ENCODE measurements at regions of chr15 and their contacts with region 1.

Region 1: DNA sequence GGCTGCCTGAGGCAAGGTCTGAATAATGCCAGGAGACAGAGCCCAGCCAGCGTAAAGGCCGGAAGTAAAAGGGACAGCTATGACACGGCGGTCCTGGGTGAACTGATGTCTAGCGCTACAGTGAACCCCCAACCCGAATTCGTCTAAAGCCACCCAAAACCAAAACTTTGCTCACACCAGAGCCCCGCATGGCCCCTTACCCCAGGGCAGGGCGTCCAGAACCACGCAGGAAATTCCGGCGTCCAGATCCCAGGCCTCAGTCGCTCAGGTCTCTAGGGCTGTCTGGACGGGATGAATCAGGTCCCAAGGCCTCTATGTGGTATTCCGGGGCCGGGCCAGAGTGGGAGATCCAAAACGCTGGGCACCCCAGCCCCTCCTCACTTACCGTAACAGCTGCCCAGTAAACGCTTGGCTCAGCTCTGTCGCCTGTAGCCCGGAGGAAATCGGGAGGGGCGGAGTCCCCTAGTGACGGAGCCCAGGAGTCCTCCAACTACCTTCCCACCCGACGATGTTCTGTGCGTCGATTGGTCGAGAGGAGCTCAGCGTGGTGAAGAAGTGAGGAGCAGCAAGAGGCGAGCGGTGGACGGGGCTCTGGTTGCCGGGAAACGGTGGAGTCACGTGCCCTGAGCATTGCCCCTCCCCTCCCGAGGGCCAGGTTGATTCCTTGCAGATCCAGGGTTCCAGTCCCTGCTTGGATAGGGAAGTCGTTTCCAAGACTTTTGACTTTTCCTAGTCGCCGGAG is at the start of gene CCDC32:
- DNase-seq: peak; percentile 75 to 96 (median 93)
- ATAC-seq: peak; percentile 95
- H3K4me3 ChIP-seq: peak within 1 kb of the TSS; percentile 85
- H3K4me3 Mint-ChIP-seq: peak within 1 kb of the TSS; percentile 80 to 97 (median 96)
- H3K27ac ChIP-seq: peak within 1 kb of the TSS; percentile 96
- H3K27ac Mint-ChIP-seq: peak within 1 kb of the TSS; percentile 82 to 98 (median 95)
- H3K4me1 ChIP-seq: peaks cover 11 to 15% of the 10 kb centered on the region in 2 donors
- H3K4me1 Mint-ChIP-seq: peaks cover 35 to 57% (median 55%) of the 10 kb centered on the region in 7 donors
- H3K27me3 ChIP-seq: no peaks in the 10 kb centered on the region
- H3K27me3 Mint-ChIP-seq: peaks cover 0 to 8% (median 0%) of the 10 kb centered on the region in 5 donors
- total RNA-seq, gene CCDC32: 22.4 to 37.3 (median 33.3) TPM

Region 2: DNA sequence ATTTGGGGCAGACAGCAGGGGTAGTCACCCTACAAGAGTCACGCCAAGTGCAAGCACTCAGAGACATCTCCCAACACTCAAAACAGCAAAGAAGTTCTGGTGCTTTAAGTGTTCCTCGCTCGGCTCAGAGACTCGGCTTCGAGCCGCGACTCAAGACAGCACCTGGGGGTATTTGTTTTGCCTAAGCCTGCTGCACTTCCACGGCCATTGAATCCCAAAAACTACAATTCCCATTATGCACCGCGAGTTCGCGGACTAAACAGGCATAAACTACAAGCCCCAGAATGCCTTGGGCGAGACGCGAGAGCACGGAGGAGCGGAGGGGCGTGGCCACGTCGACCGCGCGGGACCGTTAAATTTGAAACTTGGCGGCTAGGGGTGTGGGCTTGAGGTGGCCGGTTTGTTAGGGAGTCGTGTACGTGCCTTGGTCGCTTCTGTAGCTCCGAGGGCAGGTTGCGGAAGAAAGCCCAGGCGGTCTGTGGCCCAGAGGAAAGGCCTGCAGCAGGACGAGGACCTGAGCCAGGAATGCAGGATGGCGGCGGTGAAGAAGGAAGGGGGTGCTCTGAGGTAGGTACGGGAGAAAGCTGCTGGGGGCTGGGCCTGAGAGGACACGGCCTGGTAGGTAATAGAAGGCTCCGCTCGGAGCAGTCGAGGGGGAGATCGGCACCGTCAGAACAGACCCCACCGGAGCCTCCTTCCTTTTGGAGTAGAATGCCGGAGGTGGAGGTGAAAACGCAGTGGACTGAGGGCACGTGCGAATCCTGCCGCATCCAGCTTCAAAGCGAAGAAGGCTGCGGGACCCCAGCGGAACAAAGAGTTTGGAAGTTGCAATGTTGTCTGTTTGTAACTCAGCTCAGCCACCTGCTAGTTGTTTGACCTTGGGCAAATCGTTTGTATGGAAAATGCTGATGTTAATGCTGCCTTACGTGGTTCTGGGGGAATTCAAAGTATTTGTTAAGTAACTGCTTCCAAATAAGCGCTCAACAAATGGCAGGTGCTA is 403.8 kb before region 1 on chr15 and contains the start of gene BUB1B:
- CTCF ChIA-PET with region 1: no interaction called
- POLR2A ChIA-PET with region 1: no interaction called
- intact Hi-C with region 1: loop called in 1 of 2 experiments (anchors 2 kb)
- DNase-seq: peak; percentile 79 to 94 (median 92)
- ATAC-seq: peak; percentile 100
- H3K4me3 ChIP-seq: peak within 1 kb of the TSS; percentile 80
- H3K4me3 Mint-ChIP-seq: peak within 1 kb of the TSS in 2 of 10 donors; percentile 15 to 51
- H3K27ac ChIP-seq: peak within 1 kb of the TSS; percentile 29
- H3K27ac Mint-ChIP-seq: no peak within 1 kb of the TSS
- H3K4me1 ChIP-seq: peaks cover 0 to 7% of the 10 kb centered on the region in 2 donors
- H3K4me1 Mint-ChIP-seq: peaks cover 0 to 12% (median 0%) of the 10 kb centered on the region in 7 donors
- H3K27me3 ChIP-seq: no peaks in the 10 kb centered on the region
- H3K27me3 Mint-ChIP-seq: no peaks in the 10 kb centered on the region
- total RNA-seq, gene BUB1B: 0.41 to 55.7 (median 1.2) TPM

Region 3: DNA sequence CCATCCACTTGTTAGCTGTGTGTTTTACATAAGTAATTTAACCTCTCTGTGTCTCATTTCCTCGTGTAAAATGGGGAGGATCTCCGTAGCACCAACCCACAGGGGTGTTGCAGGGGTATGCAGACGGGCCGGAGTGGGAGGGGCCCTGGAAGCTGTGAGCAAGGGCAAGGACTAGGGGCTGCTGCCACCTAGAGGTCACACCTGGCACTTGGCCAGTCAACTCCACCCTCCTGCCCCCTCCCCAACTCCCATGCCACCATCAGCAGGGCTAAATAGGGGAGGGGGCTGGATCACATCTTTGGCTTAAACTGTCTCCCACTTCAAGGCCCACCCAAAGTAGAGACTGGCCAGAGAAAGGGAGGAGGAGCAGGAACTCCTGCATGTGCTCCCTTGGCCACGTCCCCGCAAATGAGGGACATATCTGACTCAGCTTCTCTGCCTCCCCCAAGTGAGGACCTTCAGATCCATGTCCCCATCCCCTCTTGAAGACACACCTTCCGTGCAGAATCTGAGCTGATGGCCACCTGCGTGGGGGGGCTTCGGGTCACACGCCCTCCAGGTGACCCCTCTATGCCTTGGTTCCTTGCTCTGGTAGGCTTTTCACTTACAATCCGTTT is 226.6 kb before region 1 on chr15:
- CTCF ChIA-PET with region 1: no interaction called
- POLR2A ChIA-PET with region 1: no interaction called
- intact Hi-C with region 1: no loop called
- DNase-seq: peak; percentile 61 to 79 (median 76)
- ATAC-seq: peak; percentile 87
- H3K4me3 ChIP-seq: no peak overlapping the region
- H3K4me3 Mint-ChIP-seq: peak overlapping the region in 4 of 10 donors; percentile 37 to 67 (median 48)
- H3K27ac ChIP-seq: no peak overlapping the region
- H3K27ac Mint-ChIP-seq: peak overlapping the region in 4 of 9 donors; percentile 6 to 53 (median 42)
- H3K4me1 ChIP-seq: peaks cover 0 to 16% of the 10 kb centered on the region in 2 donors
- H3K4me1 Mint-ChIP-seq: peaks cover 0 to 22% (median 20%) of the 10 kb centered on the region in 7 donors
- H3K27me3 ChIP-seq: no peaks in the 10 kb centered on the region
- H3K27me3 Mint-ChIP-seq: no peaks in the 10 kb centered on the region

Region 4: DNA sequence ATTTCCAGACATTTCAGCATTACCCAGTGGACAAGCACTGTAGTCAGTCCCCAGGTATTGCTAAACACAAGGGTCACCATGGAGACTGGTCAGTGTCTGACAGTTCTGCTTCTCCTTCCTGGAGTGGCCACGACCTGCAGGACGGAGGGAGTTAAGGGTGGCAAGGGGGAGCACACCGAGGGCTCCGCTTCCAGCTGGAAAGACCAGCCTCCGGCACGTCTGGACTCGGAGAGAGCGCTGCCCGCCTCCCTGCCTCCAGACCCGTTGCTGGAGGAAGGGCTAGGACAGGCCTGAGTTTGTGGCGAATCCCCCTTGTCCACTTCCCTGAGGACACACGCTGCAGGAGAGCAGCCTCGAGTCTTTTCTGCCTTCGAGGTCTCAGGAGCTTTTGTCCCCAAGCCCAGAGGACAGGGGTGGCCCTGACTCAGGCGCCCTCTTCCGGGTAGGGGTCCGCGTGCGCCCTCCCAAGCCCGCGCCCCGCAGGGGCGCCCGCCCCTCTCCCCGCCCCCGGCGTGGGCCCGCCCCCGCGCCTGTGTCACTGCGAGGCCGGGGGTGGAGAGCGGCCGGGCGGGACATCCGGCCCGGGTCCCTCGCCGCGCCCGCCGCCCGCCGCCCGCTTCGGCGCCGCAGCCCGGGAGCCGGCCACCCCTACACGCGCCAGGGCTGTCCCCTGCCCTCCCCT is 94.2 kb before region 1 on chr15 and contains the start of gene CHST14:
- CTCF ChIA-PET with region 1: no interaction called
- POLR2A ChIA-PET with region 1: no interaction called
- intact Hi-C with region 1: loop called (anchors 1 to 10 kb)
- DNase-seq: peak; percentile 24 to 68 (median 53)
- ATAC-seq: peak; percentile 88
- H3K4me3 ChIP-seq: peak within 1 kb of the TSS; percentile 89
- H3K4me3 Mint-ChIP-seq: peak within 1 kb of the TSS; percentile 90 to 96 (median 92)
- H3K27ac ChIP-seq: peak within 1 kb of the TSS; percentile 81
- H3K27ac Mint-ChIP-seq: peak within 1 kb of the TSS; percentile 80 to 95 (median 87)
- H3K4me1 ChIP-seq: peaks cover 8 to 16% of the 10 kb centered on the region in 2 donors
- H3K4me1 Mint-ChIP-seq: peaks cover 15 to 47% (median 37%) of the 10 kb centered on the region in 7 donors
- H3K27me3 ChIP-seq: no peaks in the 10 kb centered on the region
- H3K27me3 Mint-ChIP-seq: peaks cover 0 to 3% (median 0%) of the 10 kb centered on the region in 5 donors
- total RNA-seq, gene CHST14: 7.3 to 12.5 (median 10.8) TPM

Region 5: DNA sequence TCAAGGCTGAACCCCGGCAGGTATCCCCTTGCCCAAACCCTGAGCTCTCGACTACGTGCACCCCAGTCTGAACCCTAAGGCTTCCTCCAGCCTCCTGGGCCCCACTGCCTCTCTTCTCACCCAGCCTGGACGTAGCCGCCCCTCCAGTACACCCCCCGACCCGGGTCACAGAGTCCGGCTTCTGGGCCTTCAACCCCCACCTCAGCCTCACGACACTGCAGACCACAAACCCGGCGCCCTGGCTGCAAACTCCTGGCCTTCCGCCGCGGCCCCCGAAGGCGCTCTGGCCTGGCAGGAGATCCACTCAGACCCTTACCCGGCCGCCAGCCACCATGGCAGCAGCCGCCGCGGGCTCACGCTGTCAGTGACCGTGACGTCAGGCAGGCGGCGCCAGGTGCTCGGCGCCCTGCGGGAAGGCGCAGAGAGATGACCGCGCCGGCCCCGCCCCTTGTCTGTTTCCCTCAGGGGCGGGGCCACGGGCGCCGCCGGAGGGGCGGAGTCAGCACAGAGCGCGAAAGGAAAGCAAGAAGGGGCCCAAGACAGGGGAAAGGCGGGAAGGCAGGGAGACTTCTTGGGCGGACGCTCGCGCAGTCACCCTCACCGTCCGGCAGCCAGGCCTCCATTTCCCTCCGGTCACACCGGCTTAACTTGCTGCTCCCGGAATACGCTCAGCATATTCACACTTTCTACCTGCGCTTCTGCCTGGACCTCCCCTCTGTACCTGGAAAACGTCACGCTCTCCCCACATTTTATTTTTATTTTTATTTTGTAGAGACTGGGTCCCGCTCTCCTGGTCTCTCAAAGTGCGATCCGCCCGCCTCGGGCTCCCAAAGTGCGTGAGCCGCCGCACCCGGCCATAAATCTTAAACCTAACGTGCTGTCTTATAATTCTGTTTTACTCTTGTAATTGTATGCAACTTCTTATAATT is 190.4 kb after region 1 on chr15 and contains the start of gene RMDN3:
- CTCF ChIA-PET with region 1: no interaction called
- POLR2A ChIA-PET with region 1: no interaction called
- intact Hi-C with region 1: loop called (anchors 1 kb)
- DNase-seq: peak; percentile 89 to 97 (median 92)
- ATAC-seq: peak; percentile 99
- H3K4me3 ChIP-seq: peak within 1 kb of the TSS; percentile 94
- H3K4me3 Mint-ChIP-seq: peak within 1 kb of the TSS; percentile 90 to 98 (median 94)
- H3K27ac ChIP-seq: peak within 1 kb of the TSS; percentile 95
- H3K27ac Mint-ChIP-seq: peak within 1 kb of the TSS; percentile 89 to 99 (median 95)
- H3K4me1 ChIP-seq: peaks cover 7 to 10% of the 10 kb centered on the region in 2 donors
- H3K4me1 Mint-ChIP-seq: peaks cover 16 to 37% (median 27%) of the 10 kb centered on the region in 7 donors
- H3K27me3 ChIP-seq: no peaks in the 10 kb centered on the region
- H3K27me3 Mint-ChIP-seq: no peaks in the 10 kb centered on the region
- total RNA-seq, gene RMDN3: 19.5 to 44.0 (median 31.9) TPM

Region 6: DNA sequence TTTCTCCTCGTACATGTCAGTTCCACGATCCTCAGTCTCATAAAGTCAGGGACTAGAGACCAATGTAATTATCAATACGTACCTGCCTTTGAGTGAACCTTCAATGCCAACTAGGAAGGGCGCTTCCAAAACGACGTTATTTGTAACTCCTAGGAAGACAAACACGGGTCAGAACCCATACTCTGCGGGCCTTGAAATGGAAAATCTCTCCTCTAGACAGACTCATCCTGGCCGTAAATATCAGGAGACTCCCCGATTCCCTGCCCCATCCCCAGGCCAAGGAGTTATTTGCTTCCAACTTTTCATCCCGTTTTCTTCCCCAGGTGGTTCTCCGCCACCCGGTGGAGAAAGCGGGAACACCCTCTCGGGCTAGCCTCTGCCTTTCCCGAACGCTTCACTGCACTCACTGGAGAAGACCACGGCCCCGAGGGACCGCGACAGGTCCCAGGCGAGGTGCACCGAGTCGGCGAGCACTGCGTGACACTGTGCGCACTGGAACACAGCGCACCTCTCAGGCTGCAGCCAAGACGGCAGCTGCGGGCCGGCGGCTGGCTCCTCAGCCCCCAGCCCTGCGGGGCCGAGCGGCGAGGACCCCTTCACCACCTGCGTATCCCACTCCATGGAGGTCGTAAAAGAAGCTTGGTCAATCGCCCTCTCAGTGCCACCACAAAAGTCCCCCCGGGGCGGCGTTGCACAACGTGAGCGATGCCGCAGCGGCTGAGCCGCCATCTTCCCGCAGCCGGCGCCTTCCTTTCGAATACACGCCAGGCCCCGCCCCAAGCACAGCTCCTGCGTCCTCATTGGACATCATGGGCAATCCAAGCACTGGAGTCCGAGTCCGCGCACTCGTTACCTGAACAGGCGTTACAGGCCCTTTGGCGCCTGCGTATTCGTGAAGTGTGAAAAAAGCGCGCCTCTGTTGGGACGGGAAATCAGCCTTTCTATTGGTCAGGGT is 767.3 kb after region 1 on chr15 and contains the start of gene OIP5:
- CTCF ChIA-PET with region 1: no interaction called
- POLR2A ChIA-PET with region 1: no interaction called
- intact Hi-C with region 1: loop called in 1 of 2 experiments (anchors 1 kb)
- DNase-seq: peak; percentile 83 to 99 (median 97)
- ATAC-seq: peak; percentile 98
- H3K4me3 ChIP-seq: peak within 1 kb of the TSS; percentile 95
- H3K4me3 Mint-ChIP-seq: peak within 1 kb of the TSS; percentile 87 to 100 (median 97)
- H3K27ac ChIP-seq: peak within 1 kb of the TSS; percentile 52
- H3K27ac Mint-ChIP-seq: peak within 1 kb of the TSS; percentile 77 to 97 (median 91)
- H3K4me1 ChIP-seq: peaks cover 9 to 13% of the 10 kb centered on the region in 2 donors
- H3K4me1 Mint-ChIP-seq: peaks cover 12 to 32% (median 29%) of the 10 kb centered on the region in 7 donors
- H3K27me3 ChIP-seq: no peaks in the 10 kb centered on the region
- H3K27me3 Mint-ChIP-seq: no peaks in the 10 kb centered on the region
- total RNA-seq, gene OIP5: 0.32 to 15.2 (median 0.54) TPM in 4 of 5 experiments, not detected in the other

Region 7: GRCh38 chr15:42474827-42475226 is 1910.1 kb after region 1 on chr15:
- CTCF ChIA-PET with region 1: no interaction called
- POLR2A ChIA-PET with region 1: no interaction called
- intact Hi-C with region 1: no loop called
- DNase-seq: no peak
- ATAC-seq: no peak
- H3K4me3 ChIP-seq: no peak overlapping the region
- H3K4me3 Mint-ChIP-seq: no peak overlapping the region
- H3K27ac ChIP-seq: no peak overlapping the region
- H3K27ac Mint-ChIP-seq: peak overlapping the region in 7 of 9 donors; percentile 13 to 76 (median 54)
- H3K4me1 ChIP-seq: no peaks in the 10 kb centered on the region
- H3K4me1 Mint-ChIP-seq: peaks cover 8 to 44% (median 16%) of the 10 kb centered on the region in 7 donors
- H3K27me3 ChIP-seq: no peaks in the 10 kb centered on the region
- H3K27me3 Mint-ChIP-seq: no peaks in the 10 kb centered on the region